Caco-2 (cell line): ENCODE measurements at regions of chr1 and their contacts with region 1.

Region 1: DNA sequence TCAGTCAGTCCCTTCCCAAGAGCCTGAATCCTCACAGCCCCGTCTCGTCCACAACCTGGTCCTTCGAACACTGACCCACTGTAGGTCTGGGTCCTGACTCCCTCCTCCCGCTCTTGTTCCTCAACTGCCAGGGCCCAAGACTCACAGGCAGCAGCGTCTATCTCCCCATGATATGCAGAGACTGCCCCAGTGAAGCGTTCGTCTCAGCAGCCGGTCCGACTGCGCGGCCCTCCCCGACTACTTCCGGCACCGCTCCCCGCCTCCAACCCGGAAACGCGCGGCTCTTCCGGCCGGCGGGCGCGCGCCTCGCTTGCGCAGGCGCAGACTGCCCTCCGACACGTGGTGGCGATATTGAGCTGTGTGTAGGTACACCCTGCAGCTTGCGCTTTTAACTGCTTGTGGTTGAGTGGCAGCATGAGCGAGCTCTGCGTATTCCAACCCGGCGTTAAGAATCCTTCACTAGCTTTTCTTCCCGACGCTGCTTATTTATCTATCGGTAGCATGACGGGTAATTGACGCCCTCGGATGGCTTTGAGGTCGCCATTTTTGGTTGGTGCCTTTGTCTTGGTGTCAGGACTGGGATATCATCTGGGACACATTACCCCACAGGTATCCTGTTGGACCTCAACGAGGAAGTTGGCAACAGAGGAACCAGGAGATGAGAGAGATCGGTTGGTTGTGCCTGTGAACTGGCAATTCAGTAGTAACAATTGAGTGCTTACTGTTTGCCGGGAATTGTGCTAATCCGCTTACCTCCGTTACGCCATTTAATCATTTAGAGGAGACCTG is at the start of gene TAF12:
- DNase-seq: peak; percentile 85 to 89
- H3K4me3 ChIP-seq: peak within 1 kb of the TSS; percentile 58
- H3K4me3 Mint-ChIP-seq: peak within 1 kb of the TSS; percentile 100
- H3K27ac Mint-ChIP-seq: peak within 1 kb of the TSS; percentile 98
- H3K4me1 ChIP-seq: 0 out of 2 replicates have a peak, but pooled peaks cover 6% of the 10 kb centered on the region
- H3K4me1 Mint-ChIP-seq: peaks cover 21% of the 10 kb centered on the region
- H3K27me3 ChIP-seq: no peaks in the 10 kb centered on the region
- H3K27me3 Mint-ChIP-seq: no peaks in the 10 kb centered on the region
- CTCF ChIP-seq: peak in 1 of 2 experiments; percentile 17
- total RNA-seq, gene TAF12: 9.7 and 11.3 TPM in 2 replicates

Region 2: GRCh38 chr1:28160782-28161266 is 482.2 kb before region 1 on chr1:
- CTCF ChIA-PET with region 1: no interaction called
- POLR2A ChIA-PET with region 1: no interaction called
- intact Hi-C with region 1: no loop called
- DNase-seq: no peak
- H3K4me3 ChIP-seq: no peak overlapping the region
- H3K4me3 Mint-ChIP-seq: no peak overlapping the region
- H3K27ac Mint-ChIP-seq: no peak overlapping the region
- H3K4me1 ChIP-seq: no peaks in the 10 kb centered on the region
- H3K4me1 Mint-ChIP-seq: peaks cover 6% of the 10 kb centered on the region
- H3K27me3 ChIP-seq: no peaks in the 10 kb centered on the region
- H3K27me3 Mint-ChIP-seq: no peaks in the 10 kb centered on the region
- CTCF ChIP-seq: no peak

Region 3: GRCh38 chr1:28437934-28438699 is 204.9 kb before region 1 on chr1:
- CTCF ChIA-PET with region 1: no interaction called
- POLR2A ChIA-PET with region 1: interaction called, 11 read pairs
- intact Hi-C with region 1: no loop called
- DNase-seq: peak; percentile 57 to 62
- H3K4me3 ChIP-seq: no peak overlapping the region
- H3K4me3 Mint-ChIP-seq: peak overlapping the region; percentile 62
- H3K27ac Mint-ChIP-seq: peak overlapping the region; percentile 79
- H3K4me1 ChIP-seq: peaks cover 5% of the 10 kb centered on the region; the same call in 1 of the 2 replicates
- H3K4me1 Mint-ChIP-seq: peaks cover 6% of the 10 kb centered on the region
- H3K27me3 ChIP-seq: no peaks in the 10 kb centered on the region
- H3K27me3 Mint-ChIP-seq: no peaks in the 10 kb centered on the region
- CTCF ChIP-seq: no peak

Region 4: DNA sequence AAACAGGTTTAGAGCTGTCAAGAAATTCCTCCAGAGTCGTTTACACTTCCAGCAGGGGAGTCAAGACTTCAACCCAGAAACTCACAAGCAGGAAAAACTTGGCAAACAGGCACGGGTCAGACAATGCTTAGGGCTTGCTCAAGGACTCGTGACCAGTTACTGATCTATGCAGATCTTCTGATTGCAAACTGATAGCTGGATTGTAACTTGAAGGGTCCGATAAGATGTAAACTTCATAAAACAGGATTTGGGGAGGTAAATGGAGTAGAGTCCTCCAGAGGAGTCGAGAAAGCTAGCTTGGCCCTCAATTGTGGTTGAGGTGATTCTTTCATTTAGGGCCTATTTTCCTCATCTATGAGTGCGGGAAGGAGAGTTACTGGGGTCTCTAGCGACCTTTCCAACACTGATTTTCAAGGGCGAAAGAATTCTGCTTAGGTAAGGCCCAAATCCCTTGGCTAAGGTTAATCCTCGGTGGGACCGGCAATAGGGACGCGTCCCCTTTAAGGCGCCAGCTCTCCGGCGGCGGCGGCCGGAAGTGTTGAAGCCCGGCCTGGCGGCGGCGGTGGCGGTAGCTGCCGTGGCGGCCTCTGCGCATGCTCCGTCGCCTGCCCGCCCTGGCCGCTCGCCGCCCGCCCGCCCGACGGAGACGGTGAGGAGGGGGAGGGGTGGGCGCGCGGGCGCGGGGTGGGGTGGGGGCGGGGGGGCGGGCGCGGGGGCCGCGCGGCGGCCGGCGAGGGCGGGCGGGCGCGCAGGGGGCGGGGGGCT is 25.3 kb after region 1 on chr1 and contains the start of gene GMEB1:
- CTCF ChIA-PET with region 1: interaction called, 4 read pairs
- POLR2A ChIA-PET with region 1: interaction called, 26 read pairs
- intact Hi-C with region 1: loop called (anchors 1 kb)
- DNase-seq: peak; percentile 81 to 87
- H3K4me3 ChIP-seq: peak within 1 kb of the TSS; percentile 46
- H3K4me3 Mint-ChIP-seq: peak within 1 kb of the TSS; percentile 91
- H3K27ac Mint-ChIP-seq: peak within 1 kb of the TSS; percentile 97
- H3K4me1 ChIP-seq: peaks cover 9% of the 10 kb centered on the region
- H3K4me1 Mint-ChIP-seq: peaks cover 8% of the 10 kb centered on the region
- H3K27me3 ChIP-seq: no peaks in the 10 kb centered on the region
- H3K27me3 Mint-ChIP-seq: no peaks in the 10 kb centered on the region
- CTCF ChIP-seq: no peak
- total RNA-seq, gene GMEB1: 4.3 and 5.2 TPM in 2 replicates

Region 5: GRCh38 chr1:28736450-28737306 is 93.6 kb after region 1 on chr1 and contains the start of gene YTHDF2:
- CTCF ChIA-PET with region 1: interaction called, 17 read pairs
- POLR2A ChIA-PET with region 1: interaction called, 54 read pairs
- intact Hi-C with region 1: loop called (anchors 1 kb)
- DNase-seq: peak; percentile 93 to 95
- H3K4me3 ChIP-seq: peak within 1 kb of the TSS; percentile 62
- H3K4me3 Mint-ChIP-seq: peak within 1 kb of the TSS; percentile 92
- H3K27ac Mint-ChIP-seq: peak within 1 kb of the TSS; percentile 92
- H3K4me1 ChIP-seq: peaks cover 17% of the 10 kb centered on the region; the same call in 1 of the 2 replicates
- H3K4me1 Mint-ChIP-seq: no peaks in the 10 kb centered on the region
- H3K27me3 ChIP-seq: no peaks in the 10 kb centered on the region
- H3K27me3 Mint-ChIP-seq: no peaks in the 10 kb centered on the region
- CTCF ChIP-seq: peak; percentile 65 to 70
- total RNA-seq, gene YTHDF2: 45.8 and 51.5 TPM in 2 replicates

Region 6: DNA sequence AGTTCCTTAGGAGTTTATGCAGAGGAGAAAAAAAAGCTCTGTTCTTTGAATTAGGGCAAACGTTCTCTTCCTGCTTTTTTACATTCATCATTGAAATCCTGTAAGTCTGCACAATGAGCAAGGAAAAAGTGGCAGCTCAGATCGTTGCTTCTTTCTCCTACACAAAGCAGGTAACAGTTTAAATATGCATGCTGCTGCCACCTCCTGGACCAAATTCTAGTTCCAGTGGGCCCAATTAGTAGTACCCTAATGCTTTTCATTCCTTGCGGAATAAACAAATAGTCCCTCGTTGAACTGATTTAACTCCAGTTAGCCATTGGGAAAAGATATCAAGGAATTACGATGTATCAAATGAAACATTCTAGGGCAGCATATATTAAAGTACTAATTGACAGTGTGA is 113.8 kb after region 1 on chr1:
- CTCF ChIA-PET with region 1: interaction called, 4 read pairs
- POLR2A ChIA-PET with region 1: interaction called, 8 read pairs
- intact Hi-C with region 1: loop called (anchors 5 kb)
- DNase-seq: peak in 1 of 2 experiments; percentile 10
- H3K4me3 ChIP-seq: no peak overlapping the region
- H3K4me3 Mint-ChIP-seq: no peak overlapping the region
- H3K27ac Mint-ChIP-seq: no peak overlapping the region
- H3K4me1 ChIP-seq: peaks cover 13% of the 10 kb centered on the region
- H3K4me1 Mint-ChIP-seq: peaks cover 7% of the 10 kb centered on the region
- H3K27me3 ChIP-seq: no peaks in the 10 kb centered on the region
- H3K27me3 Mint-ChIP-seq: no peaks in the 10 kb centered on the region
- CTCF ChIP-seq: no peak

Region 7: DNA sequence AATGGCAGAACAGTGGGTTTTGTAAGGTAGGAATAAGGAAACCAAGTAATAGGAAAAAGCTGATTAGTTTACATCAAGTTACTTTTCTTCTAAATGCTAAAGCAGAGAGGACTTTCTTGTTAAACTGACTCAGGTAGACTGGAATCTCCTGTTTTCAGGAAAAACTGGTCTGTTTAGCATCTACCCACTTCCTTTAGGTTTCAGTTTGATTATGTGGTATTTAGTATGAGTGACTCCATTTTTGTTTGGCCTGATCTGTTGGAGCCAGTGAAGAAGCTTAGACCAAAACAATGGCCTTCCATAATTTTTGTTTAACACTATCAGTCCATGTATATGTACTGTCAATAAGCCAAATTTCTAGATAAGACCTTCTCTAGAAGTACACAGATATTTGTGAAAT is 359.8 kb after region 1 on chr1:
- CTCF ChIA-PET with region 1: no interaction called
- POLR2A ChIA-PET with region 1: no interaction called
- intact Hi-C with region 1: no loop called
- DNase-seq: no peak
- H3K4me3 ChIP-seq: no peak overlapping the region
- H3K4me3 Mint-ChIP-seq: no peak overlapping the region
- H3K27ac Mint-ChIP-seq: no peak overlapping the region
- H3K4me1 ChIP-seq: no peaks in the 10 kb centered on the region
- H3K4me1 Mint-ChIP-seq: no peaks in the 10 kb centered on the region
- H3K27me3 ChIP-seq: no peaks in the 10 kb centered on the region
- H3K27me3 Mint-ChIP-seq: no peaks in the 10 kb centered on the region
- CTCF ChIP-seq: no peak